Caco-2 (cell line): ENCODE measurements at regions of chr3 and their contacts with region 1.

Region 1: GRCh38 chr3:94967196-94967595 is 904.3 kb downstream of the NSUN3 start:
- DNase-seq: peak; percentile 66 to 79
- H3K4me3 ChIP-seq: no peak overlapping the region
- H3K4me3 Mint-ChIP-seq: no peak overlapping the region
- H3K27ac Mint-ChIP-seq: peak overlapping the region; percentile 18
- H3K4me1 ChIP-seq: peaks cover 37% of the 10 kb centered on the region
- H3K4me1 Mint-ChIP-seq: peaks cover 41% of the 10 kb centered on the region
- H3K27me3 ChIP-seq: no peaks in the 10 kb centered on the region
- H3K27me3 Mint-ChIP-seq: no peaks in the 10 kb centered on the region
- CTCF ChIP-seq: no peak

Region 2: DNA sequence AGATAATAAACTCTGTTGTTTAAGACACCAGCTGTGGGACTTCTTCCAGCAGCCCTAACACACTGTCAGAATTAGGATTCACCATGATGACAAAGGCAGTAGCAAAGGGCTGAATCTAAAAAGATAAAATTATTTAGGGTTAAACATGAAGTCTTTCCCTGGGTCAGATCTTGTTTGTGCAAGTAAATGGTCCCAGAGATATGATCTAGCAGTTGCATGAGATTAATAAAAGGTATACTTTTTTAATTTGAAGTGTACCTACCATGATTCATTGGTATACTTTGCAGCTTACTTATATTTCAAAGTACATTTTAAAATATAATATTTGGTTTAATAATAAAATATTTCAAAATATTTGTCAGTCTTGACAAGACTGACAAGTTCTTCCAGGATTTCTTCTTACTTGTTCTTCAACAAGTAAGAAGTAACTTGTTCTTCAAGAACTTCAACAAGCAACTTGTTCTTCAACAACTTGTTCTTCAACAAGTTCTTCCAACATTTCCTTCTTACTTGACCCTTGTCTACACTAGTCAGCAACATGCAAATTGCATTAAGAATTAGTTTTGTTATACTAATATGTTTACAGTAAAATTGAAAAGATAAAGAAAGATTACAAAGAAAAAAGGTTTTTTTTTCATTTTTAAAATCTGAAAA is 172.8 kb before region 1 on chr3:
- CTCF ChIA-PET with region 1: no interaction called
- POLR2A ChIA-PET with region 1: no interaction called
- intact Hi-C with region 1: no loop called
- DNase-seq: no peak
- H3K4me3 ChIP-seq: no peak overlapping the region
- H3K4me3 Mint-ChIP-seq: no peak overlapping the region
- H3K27ac Mint-ChIP-seq: no peak overlapping the region
- H3K4me1 ChIP-seq: no peaks in the 10 kb centered on the region
- H3K4me1 Mint-ChIP-seq: no peaks in the 10 kb centered on the region
- H3K27me3 ChIP-seq: no peaks in the 10 kb centered on the region
- H3K27me3 Mint-ChIP-seq: no peaks in the 10 kb centered on the region
- CTCF ChIP-seq: no peak

Region 3: GRCh38 chr3:94862703-94863102 is 104.5 kb before region 1 on chr3:
- CTCF ChIA-PET with region 1: no interaction called
- POLR2A ChIA-PET with region 1: no interaction called
- intact Hi-C with region 1: loop called (anchors 1 kb)
- DNase-seq: peak; percentile 39 to 53
- H3K4me3 ChIP-seq: no peak overlapping the region
- H3K4me3 Mint-ChIP-seq: no peak overlapping the region
- H3K27ac Mint-ChIP-seq: no peak overlapping the region
- H3K4me1 ChIP-seq: no peaks in the 10 kb centered on the region
- H3K4me1 Mint-ChIP-seq: no peaks in the 10 kb centered on the region
- H3K27me3 ChIP-seq: no peaks in the 10 kb centered on the region
- H3K27me3 Mint-ChIP-seq: no peaks in the 10 kb centered on the region
- CTCF ChIP-seq: peak; percentile 57 to 66

Region 4: GRCh38 chr3:94887076-94887475 is 80.1 kb before region 1 on chr3:
- CTCF ChIA-PET with region 1: no interaction called
- POLR2A ChIA-PET with region 1: no interaction called
- intact Hi-C with region 1: loop called (anchors 1 kb)
- DNase-seq: peak; percentile 44 to 58
- H3K4me3 ChIP-seq: no peak overlapping the region
- H3K4me3 Mint-ChIP-seq: no peak overlapping the region
- H3K27ac Mint-ChIP-seq: peak overlapping the region; percentile 72
- H3K4me1 ChIP-seq: peaks cover 22% of the 10 kb centered on the region
- H3K4me1 Mint-ChIP-seq: no peaks in the 10 kb centered on the region
- H3K27me3 ChIP-seq: no peaks in the 10 kb centered on the region
- H3K27me3 Mint-ChIP-seq: no peaks in the 10 kb centered on the region
- CTCF ChIP-seq: no peak

Region 5: DNA sequence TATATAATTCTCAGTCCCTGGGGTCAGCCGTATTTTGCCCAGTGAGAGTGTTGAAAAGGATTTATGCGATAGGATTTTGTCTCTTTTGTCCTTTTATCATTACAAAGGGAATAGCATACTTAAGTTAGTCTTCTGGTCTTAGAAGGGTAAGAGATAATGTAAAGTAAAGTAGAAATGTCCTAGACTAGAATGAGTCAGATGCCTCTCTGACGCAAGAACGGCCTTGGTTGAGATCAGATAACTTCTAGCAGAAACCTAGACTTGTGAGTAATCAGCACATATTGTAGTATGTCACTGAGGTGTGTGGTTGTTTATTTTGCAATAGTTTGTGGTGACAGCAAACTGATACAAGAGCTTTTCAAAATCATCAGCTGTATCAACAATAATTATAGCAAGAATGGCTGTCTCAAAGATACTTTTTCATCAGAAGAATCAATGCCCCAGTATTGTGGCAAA is 38.3 kb before region 1 on chr3:
- CTCF ChIA-PET with region 1: no interaction called
- POLR2A ChIA-PET with region 1: no interaction called
- intact Hi-C with region 1: no loop called
- DNase-seq: peak; percentile 34 to 43
- H3K4me3 ChIP-seq: no peak overlapping the region
- H3K4me3 Mint-ChIP-seq: no peak overlapping the region
- H3K27ac Mint-ChIP-seq: peak overlapping the region; percentile 70
- H3K4me1 ChIP-seq: peaks cover 7% of the 10 kb centered on the region; the same call in 1 of the 2 replicates
- H3K4me1 Mint-ChIP-seq: peaks cover 6% of the 10 kb centered on the region
- H3K27me3 ChIP-seq: no peaks in the 10 kb centered on the region
- H3K27me3 Mint-ChIP-seq: no peaks in the 10 kb centered on the region
- CTCF ChIP-seq: no peak